ENCODE measurements at regions of chr19 and their contacts with region 1.

Region 1: DNA sequence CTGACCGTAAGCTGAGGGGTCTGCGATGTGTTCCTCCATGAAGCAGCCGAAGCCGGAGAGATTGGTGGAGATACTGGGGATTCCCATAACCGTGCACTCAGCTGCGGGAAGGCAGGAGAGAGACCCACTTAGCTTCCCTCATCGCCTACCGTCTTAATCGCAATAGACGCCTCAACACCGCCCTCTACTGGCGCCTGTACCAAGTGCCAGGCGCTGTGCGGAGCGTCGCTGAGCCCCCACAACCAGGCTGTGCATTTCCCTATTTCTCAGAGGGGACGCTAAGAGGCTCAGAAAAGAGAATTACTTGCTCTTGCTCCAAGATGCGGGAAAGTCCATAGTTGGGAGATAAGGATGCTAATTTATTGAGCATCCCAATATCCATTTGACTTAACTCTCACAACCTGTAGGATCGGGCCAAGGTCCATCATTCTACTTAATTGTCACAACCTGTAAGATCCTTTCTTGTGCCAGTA is 5.8 kb downstream of the FTL start:
- DNase-seq: peak; percentile 87
- H3K4me3 ChIP-seq: no peak overlapping the region; a peak in 1 of 4 replicates
- H3K27ac ChIP-seq: no peak overlapping the region
- H3K4me1 ChIP-seq: peaks cover 0 to 9% of the 10 kb centered on the region in 2 experiments; a peak in 2 of 4 replicates
- H3K27me3 ChIP-seq: no peaks in the 10 kb centered on the region
- CTCF ChIP-seq: peak; percentile 94
- EP300 ChIP-seq: no peak
- RAD21 ChIP-seq: peak; percentile 82

Region 2: DNA sequence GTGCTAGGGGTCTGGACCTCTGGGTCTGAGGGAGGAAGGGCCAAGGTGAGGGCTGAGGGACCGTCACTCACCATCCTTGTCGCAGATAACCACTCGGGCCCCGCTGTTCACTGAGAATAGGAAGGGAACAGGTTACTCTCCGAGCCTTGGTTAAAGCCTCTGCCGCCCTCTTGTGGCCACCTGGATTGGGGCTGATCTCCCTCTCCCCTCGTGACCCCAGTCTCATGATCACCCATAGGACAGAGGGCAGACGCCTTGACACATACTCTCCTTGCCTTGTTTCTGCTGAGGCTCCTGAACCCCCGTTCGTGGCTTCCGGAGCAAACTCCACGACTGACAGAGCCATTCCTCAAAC is 135.2 kb before region 1 on chr19:
- CTCF ChIA-PET with region 1: interaction called, 42 read pairs
- POLR2A ChIA-PET with region 1: interaction called, 4 read pairs
- DNase-seq: peak; percentile 87
- H3K4me3 ChIP-seq: peak overlapping the region; percentile 63 to 71
- H3K27ac ChIP-seq: peak overlapping the region; percentile 83 to 89
- H3K4me1 ChIP-seq: peaks cover 0 to 12% of the 10 kb centered on the region in 2 experiments; a peak in 1 of 4 replicates
- H3K27me3 ChIP-seq: no peaks in the 10 kb centered on the region
- CTCF ChIP-seq: peak; percentile 94
- EP300 ChIP-seq: no peak
- RAD21 ChIP-seq: peak; percentile 92

Region 3: DNA sequence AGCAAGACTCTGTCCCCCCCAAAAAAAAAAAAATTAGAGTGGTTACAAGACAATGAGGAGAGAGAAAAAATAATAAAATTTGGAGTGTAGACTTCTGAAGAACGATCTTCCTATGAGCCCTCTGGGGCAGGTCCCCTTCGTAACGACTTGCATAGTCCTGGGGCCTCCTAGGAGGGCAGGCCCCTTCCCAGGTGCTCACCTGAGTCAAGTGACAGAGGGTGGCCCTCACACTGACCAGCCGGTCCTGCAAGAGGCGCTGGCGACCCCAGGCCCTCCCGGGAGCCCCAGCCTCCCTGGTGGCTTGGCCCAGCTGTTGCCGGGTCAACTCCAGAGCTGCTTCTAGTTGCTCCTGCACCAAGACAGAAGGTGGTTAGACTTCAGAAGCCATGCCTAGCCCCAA is 117.5 kb before region 1 on chr19:
- CTCF ChIA-PET with region 1: interaction called, 14 read pairs
- POLR2A ChIA-PET with region 1: no interaction called
- DNase-seq: no peak
- H3K4me3 ChIP-seq: no peak overlapping the region
- H3K27ac ChIP-seq: no peak overlapping the region
- H3K4me1 ChIP-seq: no peaks in the 10 kb centered on the region
- H3K27me3 ChIP-seq: no peaks in the 10 kb centered on the region
- CTCF ChIP-seq: no peak
- EP300 ChIP-seq: no peak
- RAD21 ChIP-seq: no peak

Region 4: GRCh38 chr19:48987423-48987722 is 16.4 kb after region 1 on chr19:
- CTCF ChIA-PET with region 1: interaction called, 54 read pairs
- POLR2A ChIA-PET with region 1: no interaction called
- DNase-seq: no peak
- H3K4me3 ChIP-seq: no peak overlapping the region
- H3K27ac ChIP-seq: no peak overlapping the region
- H3K4me1 ChIP-seq: peaks cover 0 to 7% of the 10 kb centered on the region in 2 experiments; a peak in 1 of 4 replicates
- H3K27me3 ChIP-seq: no peaks in the 10 kb centered on the region
- CTCF ChIP-seq: no peak
- EP300 ChIP-seq: no peak
- RAD21 ChIP-seq: no peak

Region 5: GRCh38 chr19:48999481-49000325 is 28.7 kb after region 1 on chr19:
- CTCF ChIA-PET with region 1: interaction called, 11 read pairs
- POLR2A ChIA-PET with region 1: no interaction called
- DNase-seq: peak; percentile 65
- H3K4me3 ChIP-seq: no peak overlapping the region; a peak in 1 of 4 replicates
- H3K27ac ChIP-seq: no peak overlapping the region
- H3K4me1 ChIP-seq: peaks cover 0 to 7% of the 10 kb centered on the region in 2 experiments; a peak in 1 of 4 replicates
- H3K27me3 ChIP-seq: no peaks in the 10 kb centered on the region
- CTCF ChIP-seq: peak; percentile 66
- EP300 ChIP-seq: no peak
- RAD21 ChIP-seq: peak; percentile 39

Region 6: DNA sequence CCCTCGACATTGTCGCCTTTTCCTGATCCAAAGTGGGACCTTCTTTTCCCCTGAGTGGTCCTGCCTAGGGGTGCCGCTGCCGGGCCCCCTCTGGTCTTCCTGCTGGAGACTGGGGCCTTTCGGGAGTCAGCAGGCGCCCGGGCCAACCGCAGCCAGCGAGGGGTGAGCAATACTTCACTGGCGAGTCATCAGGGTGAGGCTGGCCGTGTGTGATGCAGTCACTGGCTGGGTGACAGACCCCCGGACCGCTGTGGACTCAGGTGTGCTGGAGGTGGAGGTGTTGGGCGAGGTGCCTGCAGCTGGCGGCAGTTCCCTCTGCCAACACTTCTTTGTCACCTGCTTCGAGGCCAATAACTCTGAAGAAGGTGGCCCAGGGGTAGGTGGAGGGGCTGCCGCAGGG is 71.2 kb after region 1 on chr19:
- CTCF ChIA-PET with region 1: no interaction called
- POLR2A ChIA-PET with region 1: no interaction called
- DNase-seq: no peak
- H3K4me3 ChIP-seq: no peak overlapping the region
- H3K27ac ChIP-seq: no peak overlapping the region; a peak in 1 of 4 replicates
- H3K4me1 ChIP-seq: no peaks in the 10 kb centered on the region
- H3K27me3 ChIP-seq: no peaks in the 10 kb centered on the region
- CTCF ChIP-seq: no peak
- EP300 ChIP-seq: no peak
- RAD21 ChIP-seq: no peak

Region 7: DNA sequence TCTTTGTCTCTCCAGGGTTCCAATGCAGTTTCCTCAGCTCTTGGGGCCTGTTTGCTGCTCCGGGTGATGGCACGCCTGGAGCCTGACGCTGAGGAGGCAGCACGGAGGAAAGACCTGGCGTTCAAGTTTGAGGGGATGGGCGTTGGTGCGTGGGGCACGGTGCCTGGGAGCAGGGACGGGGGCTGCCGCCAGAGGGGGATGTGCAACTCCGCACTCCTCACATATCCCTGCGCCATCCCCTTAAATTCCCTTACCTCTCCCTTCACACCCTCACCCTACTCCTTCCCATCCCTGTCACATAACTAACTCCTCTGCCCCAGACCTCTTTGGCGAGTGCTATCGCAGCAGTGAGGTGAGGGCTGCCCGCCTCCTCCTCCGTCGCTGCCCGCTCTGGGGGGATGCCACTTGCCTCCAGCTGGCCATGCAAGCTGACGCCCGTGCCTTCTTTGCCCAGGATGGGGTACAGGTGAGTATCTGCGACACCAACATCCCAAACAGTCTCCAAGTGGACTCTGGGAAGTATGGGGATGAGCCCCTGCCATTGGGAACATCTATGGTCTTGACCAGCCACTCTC is 217.8 kb after region 1 on chr19:
- CTCF ChIA-PET with region 1: no interaction called
- POLR2A ChIA-PET with region 1: no interaction called
- DNase-seq: no peak
- H3K4me3 ChIP-seq: no peak overlapping the region
- H3K27ac ChIP-seq: no peak overlapping the region
- H3K4me1 ChIP-seq: no peaks in the 10 kb centered on the region
- H3K27me3 ChIP-seq: no peaks in the 10 kb centered on the region
- CTCF ChIP-seq: no peak
- EP300 ChIP-seq: no peak
- RAD21 ChIP-seq: no peak